ENCODE measurements at regions of chr1 and their contacts with region 1.

Region 1: DNA sequence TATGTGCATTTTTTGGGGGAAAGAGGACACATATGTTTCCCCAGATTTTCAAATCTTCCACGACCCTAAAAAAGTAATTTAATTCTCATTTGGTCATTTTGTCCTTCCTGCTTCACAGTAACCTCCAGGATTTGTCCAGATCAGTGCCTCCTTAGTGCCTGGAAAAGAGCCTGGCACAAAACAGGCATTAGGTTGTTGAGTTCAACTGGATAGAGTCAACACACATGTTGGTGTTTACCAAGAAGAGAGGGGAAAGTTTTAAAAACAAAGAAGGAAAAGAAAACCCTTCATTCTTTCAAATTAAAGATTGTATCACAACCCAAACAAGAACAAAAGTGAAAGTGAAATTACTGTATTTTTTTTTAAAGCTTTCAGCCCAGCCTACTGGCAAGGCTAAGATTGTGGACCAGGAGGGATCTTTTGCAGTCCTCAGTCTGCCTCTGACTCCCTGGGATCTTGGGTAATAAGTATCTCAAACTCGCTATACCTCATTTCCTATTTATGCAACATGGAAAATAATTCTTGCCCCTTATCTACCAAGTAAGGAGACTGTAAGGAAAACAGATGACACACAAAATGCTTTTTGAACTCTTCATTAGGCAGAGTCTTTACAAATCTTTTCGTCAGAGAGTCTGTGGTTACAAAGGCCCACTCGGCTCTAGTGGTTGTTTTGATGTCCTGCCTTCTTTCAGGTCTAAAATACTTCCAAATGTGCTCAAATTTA is 57.8 kb downstream of the ZNF281 start:
- DNase-seq: peak; percentile 24
- H3K4me3 Mint-ChIP-seq: peak overlapping the region; percentile 55
- H3K27ac Mint-ChIP-seq: peak overlapping the region; percentile 61
- H3K4me1 Mint-ChIP-seq: peaks cover 34% of the 10 kb centered on the region
- H3K27me3 Mint-ChIP-seq: no peaks in the 10 kb centered on the region

Region 2: GRCh38 chr1:199948587-199949280 is 403.3 kb before region 1 on chr1:
- CTCF ChIA-PET with region 1: no interaction called
- POLR2A ChIA-PET with region 1: no interaction called
- intact Hi-C with region 1: loop called (anchors 10 kb)
- DNase-seq: no peak
- H3K4me3 Mint-ChIP-seq: no peak overlapping the region
- H3K27ac Mint-ChIP-seq: no peak overlapping the region
- H3K4me1 Mint-ChIP-seq: no peaks in the 10 kb centered on the region
- H3K27me3 Mint-ChIP-seq: peaks cover 34% of the 10 kb centered on the region

Region 3: DNA sequence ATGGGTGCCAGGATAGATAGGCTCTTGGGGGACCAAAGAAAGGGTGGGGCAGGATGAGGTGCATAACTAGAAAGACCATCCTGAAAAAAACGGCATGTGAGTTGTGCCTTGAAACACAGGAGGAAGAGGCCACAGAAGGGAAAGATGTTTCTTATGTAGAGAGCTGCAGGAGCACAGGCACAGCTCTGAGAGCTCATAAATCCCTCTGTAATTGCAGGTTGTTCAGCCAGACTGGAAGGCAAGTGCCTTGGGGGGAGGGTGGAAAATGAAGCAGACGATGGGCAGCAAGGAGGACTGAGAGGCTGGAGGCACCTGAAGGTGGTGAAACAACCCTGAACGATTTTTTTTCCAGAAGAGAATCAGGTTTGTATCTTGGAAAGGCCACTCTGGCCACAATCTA is 153.7 kb before region 1 on chr1:
- CTCF ChIA-PET with region 1: no interaction called
- POLR2A ChIA-PET with region 1: no interaction called
- intact Hi-C with region 1: no loop called
- DNase-seq: no peak
- H3K4me3 Mint-ChIP-seq: no peak overlapping the region
- H3K27ac Mint-ChIP-seq: no peak overlapping the region
- H3K4me1 Mint-ChIP-seq: no peaks in the 10 kb centered on the region
- H3K27me3 Mint-ChIP-seq: no peaks in the 10 kb centered on the region

Region 4: DNA sequence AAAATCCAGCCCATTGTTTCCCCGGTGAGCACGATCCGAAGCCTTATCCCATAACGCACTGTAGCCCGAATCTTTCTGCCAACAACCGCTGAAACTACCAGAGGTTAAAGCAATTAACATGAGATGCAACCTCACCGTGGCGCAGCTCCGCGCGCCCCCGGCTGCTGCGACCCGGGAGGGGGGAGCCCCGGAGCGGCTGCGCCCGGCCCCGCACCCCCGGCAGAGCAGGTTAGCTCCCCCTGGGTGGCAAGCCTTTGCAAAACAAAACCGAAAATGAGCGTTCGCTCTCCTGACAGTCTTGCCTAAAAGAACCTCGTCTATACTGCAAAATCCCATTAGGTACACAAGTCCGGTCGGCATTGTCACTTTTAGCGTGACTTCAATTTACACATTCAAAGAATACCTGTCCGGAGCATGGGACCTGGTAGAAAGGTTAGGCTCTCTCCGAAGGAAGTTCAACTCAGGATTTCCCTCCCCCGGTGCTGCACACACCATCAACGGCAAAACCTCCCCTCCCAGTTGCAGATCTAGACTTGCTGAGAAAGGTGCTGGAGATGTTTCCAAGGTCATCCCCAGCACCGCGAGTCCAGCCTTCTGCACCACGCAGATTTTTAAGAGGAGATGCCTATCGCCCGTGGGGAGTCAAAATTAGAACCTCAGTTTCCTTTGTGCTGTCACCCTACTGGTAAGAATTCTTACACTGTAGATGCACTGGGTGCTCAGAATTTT is 49.6 kb before region 1 on chr1:
- CTCF ChIA-PET with region 1: no interaction called
- POLR2A ChIA-PET with region 1: interaction called, 3 read pairs
- intact Hi-C with region 1: loop called (anchors 5 kb)
- DNase-seq: peak; percentile 67
- H3K4me3 Mint-ChIP-seq: peak overlapping the region; percentile 76
- H3K27ac Mint-ChIP-seq: no peak overlapping the region
- H3K4me1 Mint-ChIP-seq: peaks cover 14% of the 10 kb centered on the region
- H3K27me3 Mint-ChIP-seq: peaks cover 5% of the 10 kb centered on the region

Region 5: DNA sequence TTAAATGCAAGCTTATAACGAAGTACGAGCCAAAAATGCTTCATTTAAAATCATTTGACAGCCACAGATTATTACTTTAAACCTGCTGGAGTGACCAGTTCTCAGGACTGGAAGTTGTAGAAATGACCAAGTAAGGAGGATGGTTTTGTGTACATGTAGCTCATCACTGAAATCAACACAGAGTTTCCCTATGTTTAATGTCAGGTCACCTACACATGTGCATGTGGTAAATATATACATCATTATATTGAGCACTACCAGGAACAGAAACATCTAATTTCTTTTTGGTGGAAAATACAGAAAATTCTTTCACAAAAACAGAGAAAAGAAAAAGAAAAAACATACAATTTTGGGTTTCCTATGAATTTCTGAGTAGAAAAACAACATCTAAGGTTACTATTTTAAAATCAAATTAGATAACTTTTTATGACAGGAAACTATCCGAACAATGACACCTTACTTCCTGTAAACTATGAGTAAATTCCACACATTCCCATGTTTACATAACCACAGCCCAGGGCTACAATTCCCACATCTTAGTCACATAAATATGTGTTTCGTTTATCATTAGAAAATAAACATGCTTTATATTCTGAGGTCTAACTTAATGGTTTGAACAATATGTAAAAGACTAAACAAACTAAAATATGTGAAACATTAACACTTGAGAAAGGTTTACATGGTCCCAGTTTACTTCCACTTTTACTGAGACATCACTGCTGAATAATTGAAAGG is 15.7 kb before region 1 on chr1:
- CTCF ChIA-PET with region 1: no interaction called
- POLR2A ChIA-PET with region 1: no interaction called
- intact Hi-C with region 1: no loop called
- DNase-seq: no peak
- H3K4me3 Mint-ChIP-seq: no peak overlapping the region
- H3K27ac Mint-ChIP-seq: no peak overlapping the region
- H3K4me1 Mint-ChIP-seq: peaks cover 13% of the 10 kb centered on the region
- H3K27me3 Mint-ChIP-seq: no peaks in the 10 kb centered on the region

Region 6: GRCh38 chr1:200367841-200368534 is 16.0 kb after region 1 on chr1:
- CTCF ChIA-PET with region 1: no interaction called
- POLR2A ChIA-PET with region 1: no interaction called
- intact Hi-C with region 1: no loop called
- DNase-seq: no peak
- H3K4me3 Mint-ChIP-seq: no peak overlapping the region
- H3K27ac Mint-ChIP-seq: no peak overlapping the region
- H3K4me1 Mint-ChIP-seq: no peaks in the 10 kb centered on the region
- H3K27me3 Mint-ChIP-seq: no peaks in the 10 kb centered on the region

Region 7: GRCh38 chr1:200409761-200410565 is 58.0 kb after region 1 on chr1 and contains the start of gene ZNF281:
- CTCF ChIA-PET with region 1: no interaction called
- POLR2A ChIA-PET with region 1: no interaction called
- intact Hi-C with region 1: loop called (anchors 2 kb)
- DNase-seq: peak; percentile 97
- H3K4me3 Mint-ChIP-seq: peak within 1 kb of the TSS; percentile 87
- H3K27ac Mint-ChIP-seq: peak within 1 kb of the TSS; percentile 88
- H3K4me1 Mint-ChIP-seq: peaks cover 49% of the 10 kb centered on the region
- H3K27me3 Mint-ChIP-seq: no peaks in the 10 kb centered on the region
- total RNA-seq, gene ZNF281: 11.0 to 11.2 TPM

Region 8: GRCh38 chr1:200448034-200448762 is 96.2 kb after region 1 on chr1:
- CTCF ChIA-PET with region 1: no interaction called
- POLR2A ChIA-PET with region 1: no interaction called
- intact Hi-C with region 1: loop called (anchors 1 kb)
- DNase-seq: peak; percentile 24
- H3K4me3 Mint-ChIP-seq: peak overlapping the region; percentile 38
- H3K27ac Mint-ChIP-seq: peak overlapping the region; percentile 87
- H3K4me1 Mint-ChIP-seq: peaks cover 41% of the 10 kb centered on the region
- H3K27me3 Mint-ChIP-seq: no peaks in the 10 kb centered on the region

Region 9: GRCh38 chr1:200473698-200474371 is 121.8 kb after region 1 on chr1:
- CTCF ChIA-PET with region 1: no interaction called
- POLR2A ChIA-PET with region 1: no interaction called
- intact Hi-C with region 1: loop called (anchors 1 kb)
- DNase-seq: peak; percentile 69
- H3K4me3 Mint-ChIP-seq: peak overlapping the region; percentile 41
- H3K27ac Mint-ChIP-seq: peak overlapping the region; percentile 65
- H3K4me1 Mint-ChIP-seq: peaks cover 42% of the 10 kb centered on the region
- H3K27me3 Mint-ChIP-seq: peaks cover 13% of the 10 kb centered on the region

Measured in activated CD4-positive, alpha-beta memory T cell treated with anti-CD3 and anti-CD28 coated beads for 36 hours (primary cell).